Right cardiac atrium (tissue), 5 donors: ENCODE measurements at regions of chr20 and their contacts with region 1.

Region 1: DNA sequence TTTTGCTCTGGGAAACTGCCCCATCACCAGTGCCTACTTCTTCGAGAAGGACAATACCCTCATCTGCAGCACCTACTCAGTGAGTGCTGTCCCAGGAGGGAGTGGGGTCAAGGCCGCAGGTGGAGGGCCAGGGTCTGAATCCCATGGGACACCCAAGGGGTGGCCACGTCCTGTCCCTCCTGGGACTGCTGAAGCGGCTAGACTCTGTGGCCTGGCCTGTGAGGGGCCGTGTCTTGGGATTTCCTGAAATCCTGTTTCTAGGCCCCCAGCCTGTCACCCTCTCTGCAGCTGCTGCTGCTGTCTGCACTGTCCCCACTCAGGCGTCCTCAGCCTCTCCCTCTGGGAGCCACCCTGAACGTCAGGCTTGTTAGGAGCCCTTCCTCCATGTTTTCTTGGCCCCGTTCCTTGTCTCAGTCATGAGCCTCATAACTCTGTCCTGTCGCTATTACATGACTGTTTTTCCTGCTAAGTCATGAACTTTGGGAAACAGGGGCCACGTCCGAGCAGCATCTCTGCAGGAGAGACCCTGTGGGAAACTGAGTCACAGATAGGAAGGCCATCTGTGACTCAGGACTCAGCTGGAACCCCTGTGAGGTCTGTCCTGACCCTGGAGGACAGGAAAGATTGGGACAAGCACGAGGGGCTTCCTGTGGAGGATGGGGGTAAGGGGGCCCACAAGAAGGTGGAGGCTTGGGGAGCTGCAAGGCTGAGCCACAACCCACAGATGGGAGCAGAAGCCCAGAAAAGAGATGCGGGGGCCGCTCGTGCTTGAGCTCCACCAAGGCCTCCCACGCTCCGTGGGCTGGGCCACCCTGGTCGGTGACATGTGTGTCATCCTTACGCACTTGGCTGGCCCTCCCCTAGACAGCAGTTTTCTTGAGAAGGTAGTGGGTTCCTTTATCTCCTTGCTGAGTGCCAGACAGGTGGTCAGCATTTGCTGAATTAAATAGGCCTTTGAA is 49.9 kb downstream of the EFCAB8 start:
- DNase-seq: peak in 1 of 3 donors; percentile 10
- ATAC-seq: no peak
- H3K4me3 ChIP-seq: no peak overlapping the region
- H3K27ac ChIP-seq: no peak overlapping the region
- H3K4me1 ChIP-seq: no peaks in the 10 kb centered on the region
- H3K27me3 ChIP-seq: no peaks in the 10 kb centered on the region

Region 2: GRCh38 chr20:33097001-33097400 is 188.4 kb after region 1 on chr20:
- intact Hi-C with region 1: loop called (anchors 2 to 5 kb)
- DNase-seq: peak; percentile 58 to 92 (median 79)
- ATAC-seq: peak in 1 of 2 donors; percentile 73
- H3K4me3 ChIP-seq: no peak overlapping the region
- H3K27ac ChIP-seq: no peak overlapping the region
- H3K4me1 ChIP-seq: no peaks in the 10 kb centered on the region
- H3K27me3 ChIP-seq: no peaks in the 10 kb centered on the region

Region 3: DNA sequence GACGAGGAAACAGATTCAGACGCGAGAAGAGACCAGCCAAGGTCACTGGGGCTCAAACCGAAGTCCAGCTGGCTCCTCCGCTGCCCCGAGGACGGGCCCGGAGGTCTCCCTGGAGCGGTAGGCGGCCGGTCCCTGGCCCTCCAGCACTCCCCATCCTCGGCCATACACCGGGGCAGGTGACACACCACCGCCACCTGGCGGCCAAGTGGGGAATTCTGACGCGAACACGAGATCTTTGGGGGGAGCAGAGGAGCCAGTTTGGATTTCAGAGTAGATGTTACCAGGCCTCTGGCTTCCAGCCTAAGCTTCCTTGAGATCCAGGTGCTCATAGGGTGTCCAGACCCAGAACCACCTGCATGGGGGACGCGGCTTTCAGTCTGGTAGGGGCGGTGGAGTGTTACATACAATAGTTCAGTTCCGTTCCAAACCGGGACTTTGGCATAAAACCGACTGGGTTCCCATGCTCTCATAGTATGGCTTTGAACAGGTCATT is 390.5 kb after region 1 on chr20:
- intact Hi-C with region 1: loop called in 3 of 4 experiments (anchors 5 to 10 kb)
- DNase-seq: peak; percentile 66 to 86 (median 86)
- ATAC-seq: peak; percentile 68 to 82
- H3K4me3 ChIP-seq: no peak overlapping the region
- H3K27ac ChIP-seq: no peak overlapping the region
- H3K4me1 ChIP-seq: no peaks in the 10 kb centered on the region
- H3K27me3 ChIP-seq: no peaks in the 10 kb centered on the region